ENCODE measurements at regions of chr19 and their contacts with region 1.

Region 1: DNA sequence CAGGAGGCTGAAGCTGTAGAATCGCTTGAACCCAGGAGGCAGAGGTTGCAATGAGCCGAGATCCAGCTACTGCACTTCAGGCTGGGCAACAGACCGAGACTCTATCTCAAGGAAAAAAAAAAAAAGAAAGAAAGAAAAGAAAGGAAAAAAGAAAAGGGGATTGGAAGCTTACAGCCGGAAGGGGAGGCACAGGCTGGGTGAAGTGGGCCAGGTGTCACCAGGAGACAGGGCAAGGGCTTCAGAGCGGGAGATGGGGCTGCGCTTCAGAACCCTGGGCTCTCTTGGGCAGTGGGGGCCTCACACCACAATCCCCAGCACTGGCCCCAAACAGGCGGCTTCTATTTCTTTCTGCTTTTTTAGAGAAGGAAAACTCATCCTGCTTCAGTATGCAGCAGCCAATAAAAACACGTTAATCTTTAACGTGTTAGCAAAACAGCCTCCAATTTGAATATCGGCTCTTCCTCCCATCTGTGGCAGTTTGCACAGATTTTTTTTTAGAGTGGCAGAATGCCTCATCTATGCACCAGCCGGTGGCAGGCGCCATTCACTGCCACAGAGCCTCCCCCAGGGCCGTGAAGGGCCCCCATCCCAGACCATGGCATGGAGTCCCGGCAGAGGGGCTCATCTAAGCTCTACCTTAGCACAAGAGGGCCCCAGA is 46.6 kb upstream of the C19orf12 start:
- DNase-seq: no peak
- ATAC-seq: no peak
- H3K4me3 ChIP-seq: no peak overlapping the region
- H3K27ac ChIP-seq: no peak overlapping the region
- H3K4me1 ChIP-seq: no peaks in the 10 kb centered on the region
- CTCF ChIP-seq: no peak
- EP300 ChIP-seq: no peak
- POLR2A ChIP-seq: no peak
- RAD21 ChIP-seq: no peak

Region 2: DNA sequence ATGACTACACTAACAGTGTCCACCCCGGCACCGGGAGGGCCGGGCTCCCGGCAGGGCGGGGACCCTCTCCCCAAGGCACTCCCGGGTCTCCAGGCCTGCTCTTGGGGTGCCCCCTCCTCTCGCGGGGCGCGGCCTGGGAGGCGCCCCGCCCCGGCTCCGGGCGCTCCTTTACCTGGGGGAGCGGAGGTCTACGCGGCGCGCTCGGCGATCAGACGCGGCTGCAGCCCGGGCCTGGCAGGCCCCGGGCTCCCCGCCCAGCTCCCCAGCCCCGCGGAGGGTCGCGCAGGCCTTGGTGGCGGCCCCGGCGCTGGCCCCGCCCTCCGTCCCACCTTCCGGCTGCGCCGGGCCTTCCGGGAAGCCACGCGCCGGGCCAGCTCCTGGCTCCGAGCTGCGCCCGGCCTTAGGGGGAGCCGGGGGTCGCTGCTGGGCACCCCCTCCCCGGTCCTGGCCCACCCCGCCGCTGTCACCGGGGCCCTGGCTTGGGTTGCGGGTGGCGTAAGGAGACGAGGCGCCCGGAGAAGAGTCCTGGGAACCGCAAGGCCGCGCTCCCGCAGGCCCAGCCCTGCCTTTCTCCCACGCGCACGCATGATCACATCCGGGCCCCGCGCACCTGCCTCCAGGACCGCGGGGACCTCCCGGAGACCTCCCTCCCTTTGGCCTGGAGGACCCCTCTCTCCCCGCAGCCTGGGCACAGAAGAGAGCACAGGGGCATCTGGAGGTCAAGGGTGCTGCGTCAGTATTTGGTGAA is 46.6 kb before region 1 on chr19 and contains the start of gene C19orf12:
- CTCF ChIA-PET with region 1: interaction called, 15 read pairs
- POLR2A ChIA-PET with region 1: no interaction called
- DNase-seq: peak; percentile 63 to 77
- ATAC-seq: peak; percentile 83 to 86
- H3K4me3 ChIP-seq: peak within 1 kb of the TSS; percentile 82
- H3K27ac ChIP-seq: peak within 1 kb of the TSS; percentile 91 to 93
- H3K4me1 ChIP-seq: peaks cover 21% of the 10 kb centered on the region
- CTCF ChIP-seq: no peak
- EP300 ChIP-seq: no peak
- POLR2A ChIP-seq: peak; percentile 93
- RAD21 ChIP-seq: no peak
- polyA plus RNA-seq, gene C19orf12: 33.6 and 34.3 TPM in 2 replicates

Region 3: GRCh38 chr19:29745253-29745652 is 16.5 kb before region 1 on chr19:
- CTCF ChIA-PET with region 1: interaction called, 243 read pairs
- POLR2A ChIA-PET with region 1: no interaction called
- DNase-seq: no peak
- ATAC-seq: peak; percentile 81 to 93
- H3K4me3 ChIP-seq: no peak overlapping the region
- H3K27ac ChIP-seq: no peak overlapping the region
- H3K4me1 ChIP-seq: no peaks in the 10 kb centered on the region
- CTCF ChIP-seq: peak; percentile 30
- EP300 ChIP-seq: no peak
- POLR2A ChIP-seq: no peak
- RAD21 ChIP-seq: 0 out of 5 replicates have a peak, but pooled peaks of 1 of the 2 experiments have one; percentile 6

Region 4: DNA sequence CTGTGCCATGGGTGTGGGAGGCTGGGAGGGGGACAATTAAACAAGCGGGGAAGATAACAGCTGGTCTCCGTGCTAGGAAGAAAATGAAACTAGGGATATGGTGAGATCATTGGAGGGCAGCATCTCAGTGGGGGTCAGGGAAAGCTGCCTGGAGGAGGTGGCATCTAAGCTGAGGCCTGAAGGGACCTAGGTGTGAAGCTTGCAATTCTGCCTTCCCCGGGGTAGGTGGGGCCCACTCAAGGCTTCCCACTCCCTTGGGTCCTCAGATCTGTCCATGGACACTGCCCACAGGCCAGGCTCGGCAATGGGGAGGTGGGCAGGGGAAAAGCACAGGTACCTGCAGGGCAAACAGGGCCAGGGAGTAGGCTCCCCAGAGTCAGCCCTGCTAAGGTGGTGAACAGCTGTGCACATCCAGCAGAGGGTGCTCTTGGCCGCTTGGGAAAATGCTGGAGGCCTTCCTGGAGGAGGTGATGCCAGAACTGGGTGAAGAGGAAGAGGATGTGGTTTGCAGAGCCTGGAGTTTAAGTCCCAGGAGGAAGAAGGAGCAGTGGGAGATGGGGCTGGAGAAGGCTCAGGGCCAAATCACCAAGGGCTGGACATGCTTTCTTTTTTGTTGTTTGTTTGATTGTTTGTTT is 24.4 kb after region 1 on chr19:
- CTCF ChIA-PET with region 1: interaction called, 69 read pairs
- POLR2A ChIA-PET with region 1: no interaction called
- DNase-seq: peak in 1 of 2 experiments; percentile 53
- ATAC-seq: peak; percentile 50 to 79; a peak in 4 of 6 replicates
- H3K4me3 ChIP-seq: no peak overlapping the region
- H3K27ac ChIP-seq: no peak overlapping the region
- H3K4me1 ChIP-seq: no peaks in the 10 kb centered on the region
- CTCF ChIP-seq: peak; percentile 56
- EP300 ChIP-seq: no peak
- POLR2A ChIP-seq: no peak
- RAD21 ChIP-seq: peak; percentile 38 to 46; a peak in 3 of 5 replicates

Region 5: DNA sequence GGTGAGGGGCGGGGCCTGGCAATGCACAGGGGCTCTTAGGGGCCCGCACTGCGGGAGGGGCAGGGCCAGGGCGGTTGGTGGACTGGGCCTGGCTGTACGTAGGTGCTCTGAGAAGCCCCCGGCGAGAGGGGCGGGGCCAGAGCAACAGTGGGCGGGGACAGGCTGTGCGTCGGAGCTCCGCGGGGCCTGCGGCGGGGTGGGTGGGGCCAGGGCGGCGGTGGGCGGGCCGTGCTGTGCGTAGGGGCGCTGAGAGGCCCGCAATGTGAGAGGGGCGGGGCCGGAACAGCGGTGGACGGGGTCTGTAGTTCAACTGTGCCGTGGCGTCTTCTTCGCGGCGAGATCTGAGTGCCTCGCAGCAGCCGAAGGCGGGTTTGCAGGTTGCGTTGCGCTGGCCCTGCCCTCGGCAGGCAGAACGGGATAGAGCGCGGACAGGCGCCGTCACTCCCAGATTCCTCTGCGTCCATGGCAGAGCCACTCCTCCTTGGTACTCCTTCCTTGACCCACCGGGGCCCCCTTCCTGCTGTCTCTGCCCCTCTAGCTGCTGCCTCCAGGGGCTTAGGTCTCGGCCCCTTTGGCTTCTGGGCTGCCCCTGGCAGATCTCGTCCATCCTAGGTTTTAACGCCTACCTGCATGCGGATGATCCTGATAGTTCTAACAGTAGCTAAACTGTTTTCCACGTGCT is 83.3 kb after region 1 on chr19:
- CTCF ChIA-PET with region 1: interaction called, 20 read pairs
- POLR2A ChIA-PET with region 1: no interaction called
- DNase-seq: peak; percentile 92 to 99
- ATAC-seq: peak; percentile 78 to 88
- H3K4me3 ChIP-seq: peak overlapping the region; percentile 57
- H3K27ac ChIP-seq: peak overlapping the region; percentile 61 to 84
- H3K4me1 ChIP-seq: peaks cover 20% of the 10 kb centered on the region
- CTCF ChIP-seq: no peak
- EP300 ChIP-seq: no peak
- POLR2A ChIP-seq: peak; percentile 72
- RAD21 ChIP-seq: no peak

Region 6: DNA sequence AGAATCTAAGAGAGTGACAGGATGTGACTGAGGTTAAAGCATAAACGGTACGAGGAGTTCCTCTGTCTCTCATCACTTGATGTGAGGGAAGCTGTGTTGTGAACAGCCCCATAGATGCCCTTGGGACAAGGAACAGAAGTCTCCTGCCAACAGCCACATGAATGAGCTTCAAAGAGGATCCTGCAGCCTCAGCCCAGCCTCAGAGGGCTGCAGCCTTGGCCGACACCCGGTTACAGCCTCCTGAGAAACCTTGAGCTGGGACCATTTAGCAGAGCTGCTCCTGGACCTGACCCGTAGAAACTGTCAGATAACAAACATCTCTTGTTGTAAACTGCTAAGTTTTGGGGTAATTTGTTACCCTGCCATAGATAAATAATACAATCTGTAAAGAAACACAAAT is 104.3 kb after region 1 on chr19:
- CTCF ChIA-PET with region 1: interaction called, 301 read pairs
- POLR2A ChIA-PET with region 1: no interaction called
- DNase-seq: no peak
- ATAC-seq: no peak
- H3K4me3 ChIP-seq: no peak overlapping the region
- H3K27ac ChIP-seq: no peak overlapping the region
- H3K4me1 ChIP-seq: no peaks in the 10 kb centered on the region
- CTCF ChIP-seq: no peak
- EP300 ChIP-seq: no peak
- POLR2A ChIP-seq: no peak
- RAD21 ChIP-seq: no peak

Region 7: GRCh38 chr19:30085394-30085793 is 323.7 kb after region 1 on chr19:
- CTCF ChIA-PET with region 1: no interaction called
- POLR2A ChIA-PET with region 1: no interaction called
- DNase-seq: peak in 1 of 2 experiments; percentile 25
- ATAC-seq: peak in 1 of 2 experiments; percentile 10; a peak in 2 of 6 replicates
- H3K4me3 ChIP-seq: no peak overlapping the region
- H3K27ac ChIP-seq: no peak overlapping the region
- H3K4me1 ChIP-seq: no peaks in the 10 kb centered on the region
- CTCF ChIP-seq: 0 out of 3 replicates have a peak, but pooled peaks have one; percentile 11
- EP300 ChIP-seq: no peak
- POLR2A ChIP-seq: no peak
- RAD21 ChIP-seq: peak in 1 of 2 experiments; percentile 32; a peak in 2 of 5 replicates